Activated CD4-positive, alpha-beta T cell treated with anti-CD3 and anti-CD28 coated beads for 36 hours (primary cell): ENCODE measurements at regions of chr1 and their contacts with region 1.

Region 1: GRCh38 chr1:206551986-206552326 is 44.6 kb downstream of the RASSF5 start:
- DNase-seq: peak; percentile 91
- ATAC-seq: peak; percentile 84
- H3K4me3 Mint-ChIP-seq: peak overlapping the region; percentile 61
- H3K27ac Mint-ChIP-seq: peak overlapping the region; percentile 98
- H3K4me1 Mint-ChIP-seq: peaks cover 62% of the 10 kb centered on the region
- H3K27me3 Mint-ChIP-seq: no peaks in the 10 kb centered on the region

Region 2: DNA sequence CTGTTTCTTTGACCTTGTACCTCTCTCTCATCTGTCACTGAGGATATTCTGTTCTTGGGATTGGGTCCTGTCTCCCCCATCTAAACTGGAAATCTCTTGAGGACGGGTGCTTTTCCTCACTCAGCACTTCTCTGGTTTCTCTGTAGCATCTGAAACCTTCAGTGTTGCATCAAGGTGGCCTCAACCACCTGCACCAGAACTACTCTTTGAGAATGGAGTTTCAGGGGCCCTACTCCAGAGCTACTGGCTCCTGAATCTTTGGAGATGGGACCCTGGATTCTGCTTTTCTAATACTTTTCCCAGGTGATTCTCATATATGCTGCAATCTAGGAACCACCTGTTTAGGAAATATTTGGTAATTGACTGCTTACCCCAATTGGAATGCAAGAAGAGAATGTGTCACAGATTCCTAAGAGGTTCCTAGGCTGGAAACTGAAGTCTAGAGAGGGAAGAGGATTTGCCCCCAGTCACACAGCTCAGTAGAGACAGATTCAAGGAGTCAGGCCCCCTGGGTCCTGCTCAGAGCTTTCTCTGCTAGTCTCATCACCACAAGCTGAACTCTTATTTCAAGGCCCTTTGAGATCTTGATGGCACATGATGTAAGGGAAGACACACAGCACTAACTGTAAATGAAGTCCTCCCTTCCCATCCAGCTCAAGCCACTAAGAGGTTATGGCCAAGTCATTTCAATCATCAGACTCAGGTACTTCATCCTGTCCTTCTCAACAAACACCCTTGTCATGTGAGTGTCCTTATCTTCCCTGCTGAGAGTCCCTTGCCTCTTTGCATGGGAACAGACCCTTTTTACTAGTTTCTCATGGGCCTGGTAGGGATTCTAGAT is 11.6 kb after region 1 on chr1:
- CTCF ChIA-PET with region 1: interaction called, 621 read pairs
- POLR2A ChIA-PET with region 1: interaction called, 22 read pairs
- intact Hi-C with region 1: loop called in 1 of 2 experiments (anchors 1 kb)
- DNase-seq: peak; percentile 22
- ATAC-seq: peak; percentile 4
- H3K4me3 Mint-ChIP-seq: peak overlapping the region; percentile 95
- H3K27ac Mint-ChIP-seq: peak overlapping the region; percentile 99
- H3K4me1 Mint-ChIP-seq: peaks cover 87% of the 10 kb centered on the region
- H3K27me3 Mint-ChIP-seq: no peaks in the 10 kb centered on the region